Panc1 (cell line): ENCODE measurements at regions of chr1 and their contacts with region 1.

Region 1: GRCh38 chr1:44103270-44104131 is 15.1 kb upstream of the KLF17 start:
- DNase-seq: no peak
- ATAC-seq: no peak
- H3K4me3 ChIP-seq: no peak overlapping the region
- H3K27ac ChIP-seq: no peak overlapping the region
- H3K4me1 ChIP-seq: no peaks in the 10 kb centered on the region
- H3K27me3 ChIP-seq: no peaks in the 10 kb centered on the region
- CTCF ChIP-seq: peak; percentile 61

Region 2: GRCh38 chr1:44154047-44154446 is 50.5 kb after region 1 on chr1:
- CTCF ChIA-PET with region 1: no interaction called
- POLR2A ChIA-PET with region 1: no interaction called
- in situ Hi-C with region 1: loop called (anchors 5 kb)
- intact Hi-C with region 1: no loop called
- DNase-seq: no peak
- ATAC-seq: no peak
- H3K4me3 ChIP-seq: no peak overlapping the region
- H3K27ac ChIP-seq: no peak overlapping the region; the same call in 1 of the 2 replicates
- H3K4me1 ChIP-seq: peaks cover 14% of the 10 kb centered on the region
- H3K27me3 ChIP-seq: no peaks in the 10 kb centered on the region
- CTCF ChIP-seq: no peak